Prostate gland (tissue), 2 donors: ENCODE measurements at regions of chr6 and their contacts with region 1.

Region 1: DNA sequence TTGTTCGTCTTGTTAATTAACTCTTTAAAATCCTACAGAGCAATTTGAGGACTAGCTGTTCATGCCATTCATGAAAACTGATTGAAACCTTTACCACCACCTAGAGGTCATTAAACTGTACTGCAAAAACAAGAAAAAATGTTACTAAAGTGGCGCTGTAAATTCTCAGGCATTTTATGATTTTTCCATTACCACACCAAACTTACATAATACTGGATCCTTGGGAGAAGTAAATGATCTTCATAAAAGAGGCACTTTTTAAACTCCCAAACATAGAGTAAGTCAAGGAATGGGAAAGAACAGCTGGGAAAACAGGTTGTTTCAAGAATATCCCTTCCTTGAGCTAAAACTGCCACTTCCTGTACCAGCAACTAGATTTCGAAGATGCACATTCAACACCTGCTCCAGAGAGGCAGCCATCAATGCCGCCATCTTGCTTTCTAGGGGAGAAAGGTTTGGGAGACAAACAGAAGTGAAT is 54.3 kb downstream of the MYLIP start:
- DNase-seq: no peak
- H3K4me3 ChIP-seq: no peak overlapping the region
- H3K27ac ChIP-seq: no peak overlapping the region
- H3K4me1 ChIP-seq: no peaks in the 10 kb centered on the region
- H3K27me3 ChIP-seq: no peaks in the 10 kb centered on the region
- CTCF ChIP-seq: peak; percentile 55 to 83 (median 83)
- POLR2A ChIP-seq: no peak

Region 2: DNA sequence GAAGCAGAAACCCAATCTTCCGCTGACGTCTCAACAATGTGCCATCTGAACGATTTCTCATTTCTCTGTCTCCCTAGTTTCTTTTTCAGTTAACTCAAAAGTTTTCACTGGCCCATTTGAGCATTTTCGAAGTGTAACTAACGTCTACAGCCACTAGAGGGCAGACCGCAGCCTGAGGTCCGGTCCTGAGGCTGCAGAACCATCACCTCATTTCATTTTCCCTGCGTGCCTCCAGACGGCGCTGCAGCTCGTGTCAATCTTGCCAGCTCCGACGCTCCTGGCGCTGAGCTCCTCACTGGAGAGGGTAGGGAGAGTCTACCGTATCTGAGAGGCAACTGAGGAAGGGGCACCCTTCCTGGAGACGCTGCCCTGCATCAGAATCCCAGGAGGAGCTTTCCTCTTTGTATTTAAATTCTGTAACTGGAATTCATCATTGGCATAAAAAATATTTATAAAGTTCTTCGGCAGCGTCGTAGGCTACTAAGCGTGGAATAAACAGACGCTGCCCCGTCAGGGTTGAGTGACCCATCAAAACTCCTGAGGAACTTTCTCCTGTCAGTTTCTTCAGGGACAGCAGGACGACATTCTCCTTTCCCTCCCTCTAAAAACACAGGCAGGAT is 491.9 kb before region 1 on chr6:
- intact Hi-C with region 1: loop called (anchors 2 kb)
- DNase-seq: peak; percentile 77
- H3K4me3 ChIP-seq: no peak overlapping the region
- H3K27ac ChIP-seq: no peak overlapping the region
- H3K4me1 ChIP-seq: no peaks in the 10 kb centered on the region
- H3K27me3 ChIP-seq: no peaks in the 10 kb centered on the region
- CTCF ChIP-seq: peak; percentile 87 to 100 (median 99)
- POLR2A ChIP-seq: no peak

Region 3: DNA sequence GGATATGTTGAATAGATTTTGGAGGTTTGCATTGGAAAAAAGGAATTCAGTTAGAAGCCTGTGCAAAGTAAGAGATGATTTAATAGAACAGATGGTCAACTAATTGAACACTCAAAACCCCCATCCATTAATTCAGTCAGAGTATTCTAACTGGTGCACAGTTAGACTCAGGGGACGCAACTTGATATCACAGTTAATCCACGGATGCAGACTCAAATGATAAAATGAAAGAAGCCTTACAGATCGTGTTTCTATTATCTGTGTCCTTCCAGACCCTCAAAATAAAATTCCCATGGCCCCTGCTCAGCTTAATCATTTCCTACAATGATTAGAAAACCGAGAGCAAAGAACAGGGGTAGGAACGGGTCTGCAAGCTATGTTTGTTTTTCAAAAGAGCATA is 475.0 kb before region 1 on chr6:
- intact Hi-C with region 1: loop called (anchors 5 kb)
- DNase-seq: no peak
- H3K4me3 ChIP-seq: no peak overlapping the region
- H3K27ac ChIP-seq: no peak overlapping the region
- H3K4me1 ChIP-seq: no peaks in the 10 kb centered on the region
- H3K27me3 ChIP-seq: no peaks in the 10 kb centered on the region
- CTCF ChIP-seq: no peak
- POLR2A ChIP-seq: no peak